Activated B cell treated with CpG ODN at 0.5 μM for 24 hours (primary cell): ENCODE measurements at regions of chr12 and their contacts with region 1.

Region 1: GRCh38 chr12:56359851-56360767 is at the start of gene STAT2:
- DNase-seq: peak; percentile 98
- ATAC-seq: peak; percentile 94
- H3K4me3 Mint-ChIP-seq: peak within 1 kb of the TSS; percentile 92
- H3K27ac Mint-ChIP-seq: peak within 1 kb of the TSS; percentile 94
- H3K4me1 Mint-ChIP-seq: peaks cover 36% of the 10 kb centered on the region
- H3K27me3 Mint-ChIP-seq: no peaks in the 10 kb centered on the region
- CTCF ChIP-seq: no peak
- total RNA-seq, gene STAT2: 159 and 177 TPM in 2 replicates

Region 2: DNA sequence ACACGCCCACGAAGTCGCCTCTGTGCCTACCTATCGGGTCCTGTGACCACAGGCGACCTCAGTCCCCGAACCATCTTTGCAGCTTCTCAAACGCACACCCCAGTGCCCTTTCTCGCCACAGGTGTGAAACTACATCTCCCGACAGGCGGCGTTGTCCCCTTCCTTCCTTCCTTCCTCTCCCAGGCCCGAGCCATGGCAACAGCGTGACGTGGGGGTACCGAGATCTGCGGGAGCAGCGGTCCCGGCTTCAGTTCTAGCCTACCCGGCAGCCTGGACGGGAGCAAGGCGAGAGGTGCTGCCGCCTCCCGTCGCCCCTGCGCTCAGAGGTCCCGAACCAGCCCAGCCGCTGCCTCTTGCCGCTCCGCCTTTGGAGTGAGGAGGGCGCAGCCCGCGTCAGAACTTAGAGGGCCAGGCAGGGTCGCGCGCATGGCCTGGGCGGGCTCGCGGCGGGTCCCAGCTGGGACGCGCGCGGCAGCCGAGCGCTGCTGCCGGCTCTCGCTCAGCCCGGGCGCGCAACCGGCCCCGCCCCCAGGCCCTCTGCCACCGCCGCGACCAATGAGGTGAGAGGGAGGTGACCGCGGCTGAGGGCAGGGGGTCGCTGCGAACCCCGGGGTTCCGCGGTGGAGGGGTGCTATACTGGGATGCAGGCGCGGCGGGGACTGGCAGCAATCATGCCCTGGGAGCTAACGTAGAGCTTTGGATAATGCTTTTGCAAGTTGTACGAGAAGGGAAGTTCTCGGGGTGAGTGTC is 93.2 kb before region 1 on chr12 and contains the start of gene COQ10A:
- CTCF ChIA-PET with region 1: no interaction called
- POLR2A ChIA-PET with region 1: interaction called, 11 read pairs
- intact Hi-C with region 1: loop called (anchors 1 kb)
- DNase-seq: peak; percentile 90
- ATAC-seq: peak; percentile 90
- H3K4me3 Mint-ChIP-seq: peak within 1 kb of the TSS; percentile 93
- H3K27ac Mint-ChIP-seq: peak within 1 kb of the TSS; percentile 93
- H3K4me1 Mint-ChIP-seq: peaks cover 18% of the 10 kb centered on the region
- H3K27me3 Mint-ChIP-seq: no peaks in the 10 kb centered on the region
- CTCF ChIP-seq: no peak
- total RNA-seq, gene COQ10A: 30.2 and 35.6 TPM in 2 replicates

Region 3: DNA sequence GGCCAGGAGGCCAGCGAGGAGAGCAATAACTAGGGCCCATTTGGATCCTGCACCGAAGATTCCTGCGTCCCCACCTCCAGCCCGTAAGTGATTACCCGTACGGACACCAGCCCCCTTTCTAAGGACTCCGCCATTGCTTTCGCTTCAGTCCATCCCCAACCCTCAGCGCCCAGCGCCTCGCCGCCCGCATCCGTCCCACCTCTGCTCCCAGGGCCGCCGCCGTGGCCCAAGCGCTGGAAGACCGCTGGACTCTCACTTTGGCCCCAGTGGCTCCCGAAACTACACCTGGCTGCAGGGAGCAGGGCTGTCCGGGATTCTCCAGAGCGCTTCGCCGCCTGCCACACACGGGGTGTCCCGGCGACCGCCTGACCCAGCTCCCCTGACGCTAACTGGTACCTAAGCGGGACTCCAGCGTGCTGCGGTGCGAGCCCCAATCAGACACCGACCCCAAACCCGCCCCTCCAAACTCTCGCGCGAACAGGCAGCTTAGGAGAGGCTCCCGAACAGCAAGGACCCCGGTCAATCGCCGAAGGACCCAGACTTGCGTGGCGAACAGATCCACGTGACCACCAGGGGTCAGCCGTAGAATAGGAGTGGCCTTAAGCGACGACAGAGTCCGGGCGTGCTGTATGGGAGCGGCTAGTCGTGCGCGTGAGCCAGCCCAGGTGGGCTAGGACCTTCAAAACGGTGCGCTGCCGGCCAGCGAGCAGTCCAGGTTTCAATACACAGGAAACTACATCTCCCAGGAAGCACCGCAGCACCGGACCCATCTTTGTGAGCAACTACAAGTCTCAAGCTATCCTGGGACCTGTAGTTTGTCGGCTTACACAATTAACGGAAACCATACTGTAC is 44.3 kb before region 1 on chr12 and contains the start of gene CNPY2:
- CTCF ChIA-PET with region 1: interaction called, 14 read pairs
- POLR2A ChIA-PET with region 1: interaction called, 53 read pairs
- intact Hi-C with region 1: loop called (anchors 1 kb)
- DNase-seq: peak; percentile 85
- ATAC-seq: peak; percentile 89
- H3K4me3 Mint-ChIP-seq: peak within 1 kb of the TSS; percentile 98
- H3K27ac Mint-ChIP-seq: peak within 1 kb of the TSS; percentile 98
- H3K4me1 Mint-ChIP-seq: peaks cover 21% of the 10 kb centered on the region
- H3K27me3 Mint-ChIP-seq: no peaks in the 10 kb centered on the region
- CTCF ChIP-seq: no peak
- total RNA-seq, gene CNPY2: 72.1 and 98.8 TPM in 2 replicates

Region 4: DNA sequence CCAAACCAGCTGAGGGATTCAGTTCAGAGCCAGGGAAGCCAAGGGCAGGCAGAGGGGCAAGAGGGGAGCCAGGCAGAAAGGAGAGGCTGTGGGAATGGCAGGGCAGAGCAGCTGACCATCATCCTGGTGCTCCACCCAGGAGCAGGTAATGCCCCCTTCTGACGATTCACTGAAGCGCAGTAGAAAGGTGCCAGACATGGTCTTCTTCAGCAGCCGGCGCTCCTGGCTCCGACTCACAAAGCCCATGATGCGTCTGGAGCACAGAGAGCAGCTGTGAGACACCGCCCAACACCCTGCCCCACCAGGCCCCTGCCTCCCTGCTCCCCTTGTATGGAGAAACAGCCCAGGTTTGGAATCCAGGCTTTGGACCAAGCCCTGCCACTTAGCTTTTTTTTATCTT is 13.4 kb before region 1 on chr12:
- CTCF ChIA-PET with region 1: interaction called, 3 read pairs
- POLR2A ChIA-PET with region 1: interaction called, 19 read pairs
- intact Hi-C with region 1: no loop called
- DNase-seq: no peak
- ATAC-seq: no peak
- H3K4me3 Mint-ChIP-seq: no peak overlapping the region
- H3K27ac Mint-ChIP-seq: no peak overlapping the region
- H3K4me1 Mint-ChIP-seq: no peaks in the 10 kb centered on the region
- H3K27me3 Mint-ChIP-seq: no peaks in the 10 kb centered on the region
- CTCF ChIP-seq: no peak

Region 5: GRCh38 chr12:56413392-56413791 is 53.3 kb after region 1 on chr12:
- CTCF ChIA-PET with region 1: no interaction called
- POLR2A ChIA-PET with region 1: no interaction called
- intact Hi-C with region 1: no loop called
- DNase-seq: no peak
- ATAC-seq: no peak
- H3K4me3 Mint-ChIP-seq: no peak overlapping the region
- H3K27ac Mint-ChIP-seq: no peak overlapping the region
- H3K4me1 Mint-ChIP-seq: no peaks in the 10 kb centered on the region
- H3K27me3 Mint-ChIP-seq: no peaks in the 10 kb centered on the region
- CTCF ChIP-seq: no peak

Region 6: GRCh38 chr12:56448860-56449621 is 88.9 kb after region 1 on chr12 and contains the start of gene TIMELESS:
- CTCF ChIA-PET with region 1: interaction called, 8 read pairs
- POLR2A ChIA-PET with region 1: interaction called, 85 read pairs
- intact Hi-C with region 1: loop called (anchors 1 kb)
- DNase-seq: peak; percentile 85
- ATAC-seq: peak; percentile 96
- H3K4me3 Mint-ChIP-seq: peak within 1 kb of the TSS; percentile 94
- H3K27ac Mint-ChIP-seq: peak within 1 kb of the TSS; percentile 97
- H3K4me1 Mint-ChIP-seq: peaks cover 22% of the 10 kb centered on the region
- H3K27me3 Mint-ChIP-seq: no peaks in the 10 kb centered on the region
- CTCF ChIP-seq: no peak
- total RNA-seq, gene TIMELESS: 31.8 and 35.0 TPM in 2 replicates

Region 7: DNA sequence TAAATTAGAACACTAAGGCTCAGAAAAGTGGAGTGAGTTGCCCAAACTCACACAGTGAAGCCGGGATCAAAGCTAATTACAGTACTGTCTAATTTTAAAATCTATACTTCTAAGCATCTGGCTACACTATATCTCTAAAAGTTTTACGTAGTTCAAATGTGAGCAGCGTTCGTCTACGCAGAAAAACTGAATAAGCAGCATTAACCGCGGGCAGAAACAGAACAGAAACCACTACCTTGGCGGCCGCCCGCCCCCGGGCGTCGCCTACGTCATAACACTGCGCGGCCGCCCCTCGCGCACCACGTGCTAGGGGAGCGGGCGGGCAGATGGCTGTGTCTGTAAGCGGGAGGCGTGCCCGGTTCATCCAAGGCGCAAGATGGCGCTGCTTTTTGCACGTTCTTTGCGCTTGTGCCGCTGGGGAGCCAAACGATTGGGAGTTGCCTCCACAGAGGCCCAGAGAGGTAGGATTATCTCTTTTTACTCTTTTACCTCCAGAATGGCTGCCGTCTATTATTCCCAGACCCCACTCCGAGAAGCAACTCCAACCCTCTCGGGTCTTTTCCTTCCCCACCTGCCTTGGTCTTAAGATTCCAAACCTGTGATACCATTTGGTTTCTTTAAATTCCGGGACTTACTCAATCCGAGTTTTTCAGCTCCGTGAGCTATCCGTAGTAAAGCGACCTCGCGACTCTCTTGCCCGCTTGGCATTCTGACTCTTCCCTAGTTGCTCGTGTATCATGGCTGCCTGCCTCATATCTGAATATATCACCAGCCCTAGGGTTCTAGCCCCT is 108.3 kb after region 1 on chr12 and contains the start of gene SPRYD4:
- CTCF ChIA-PET with region 1: interaction called, 35 read pairs
- POLR2A ChIA-PET with region 1: interaction called, 47 read pairs
- intact Hi-C with region 1: loop called (anchors 1 kb)
- DNase-seq: peak; percentile 92
- ATAC-seq: peak; percentile 90
- H3K4me3 Mint-ChIP-seq: peak within 1 kb of the TSS; percentile 94
- H3K27ac Mint-ChIP-seq: peak within 1 kb of the TSS; percentile 94
- H3K4me1 Mint-ChIP-seq: peaks cover 36% of the 10 kb centered on the region
- H3K27me3 Mint-ChIP-seq: no peaks in the 10 kb centered on the region
- CTCF ChIP-seq: no peak
- total RNA-seq, gene SPRYD4: 5.8 and 7.5 TPM in 2 replicates

Region 8: GRCh38 chr12:57261428-57261865 is 901.3 kb after region 1 on chr12:
- CTCF ChIA-PET with region 1: no interaction called
- POLR2A ChIA-PET with region 1: interaction called, 14 read pairs
- intact Hi-C with region 1: no loop called
- DNase-seq: no peak
- ATAC-seq: no peak
- H3K4me3 Mint-ChIP-seq: no peak overlapping the region
- H3K27ac Mint-ChIP-seq: no peak overlapping the region
- H3K4me1 Mint-ChIP-seq: peaks cover 5% of the 10 kb centered on the region
- H3K27me3 Mint-ChIP-seq: no peaks in the 10 kb centered on the region
- CTCF ChIP-seq: no peak